Motor neuron (in vitro differentiated cells): ENCODE measurements at regions of chr2 and their contacts with region 1.

Region 1: GRCh38 chr2:175690113-175690837 is 311.8 kb downstream of the LNPK start:
- ATAC-seq: peak in 6 of 8 experiments; percentile 45 to 96 (median 74)
- H3K4me3 ChIP-seq: no peak overlapping the region
- H3K27ac ChIP-seq: no peak overlapping the region
- H3K4me1 ChIP-seq: peaks cover 0 to 27% of the 10 kb centered on the region in 2 donors

Region 2: DNA sequence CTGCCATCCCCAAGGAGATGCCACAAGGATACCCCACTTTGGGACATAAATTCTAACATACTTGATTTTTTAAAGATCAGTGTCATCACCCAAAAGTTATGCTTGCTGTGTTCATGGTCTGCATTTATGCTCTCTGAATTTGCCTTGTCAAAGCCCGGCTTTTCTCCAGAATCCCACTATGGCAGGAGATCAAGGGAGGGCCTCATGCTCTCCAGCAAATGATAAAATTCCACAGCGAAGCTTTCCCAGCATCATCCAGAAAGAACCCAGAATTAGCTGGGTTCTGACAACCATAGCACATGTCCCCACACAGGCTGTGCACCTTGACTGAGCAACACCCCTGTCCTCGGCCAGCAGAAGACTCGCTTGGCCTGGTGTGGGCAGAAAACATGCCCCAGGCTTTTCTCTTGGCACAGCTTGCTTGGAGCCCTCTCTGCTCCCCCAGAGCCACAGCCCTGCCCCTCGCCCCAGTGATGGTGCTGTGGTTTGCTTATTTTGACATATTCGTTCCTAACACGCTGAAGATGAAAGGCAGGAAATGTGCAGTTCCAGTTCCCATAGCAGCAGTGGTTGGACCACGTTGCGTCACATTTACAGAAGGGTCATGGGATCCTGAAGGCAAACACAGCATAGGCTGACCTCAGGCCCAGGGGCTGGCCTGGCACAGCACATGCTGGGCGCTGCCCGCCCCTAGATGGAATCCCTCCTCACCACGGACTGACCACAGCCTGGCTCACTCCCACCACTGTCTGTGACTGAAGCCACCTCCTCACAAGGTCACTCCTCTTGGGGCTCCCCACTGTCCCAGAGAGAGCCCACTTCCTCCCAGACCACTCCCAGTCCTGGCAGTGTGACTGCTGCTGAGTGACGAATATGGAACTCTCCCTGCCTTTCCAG is 911.9 kb before region 1 on chr2:
- in situ Hi-C with region 1: no loop called
- ATAC-seq: peak in 7 of 8 experiments; percentile 15 to 96 (median 58)
- H3K4me3 ChIP-seq: no peak overlapping the region
- H3K27ac ChIP-seq: no peak overlapping the region
- H3K4me1 ChIP-seq: peaks cover 36 to 41% of the 10 kb centered on the region in 2 donors

Region 3: DNA sequence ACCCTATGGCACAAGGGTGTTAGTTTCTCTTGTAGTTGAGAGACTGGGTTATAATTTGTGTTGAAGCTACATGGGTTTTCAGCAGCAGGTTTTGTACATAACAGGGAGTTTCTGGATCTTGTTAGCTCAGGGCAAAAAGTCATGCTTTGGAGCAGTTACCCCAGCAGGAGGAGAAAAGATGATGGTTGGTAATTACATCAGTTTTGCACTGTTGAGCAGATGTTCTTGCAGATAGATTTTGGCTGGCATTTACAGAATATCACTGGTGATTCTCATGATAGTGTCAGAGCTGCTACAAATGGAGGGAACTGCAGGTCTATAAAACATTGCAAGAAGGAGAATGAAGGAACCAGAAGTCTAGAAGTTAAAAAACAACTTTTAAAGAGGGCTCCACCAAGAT is 293.6 kb before region 1 on chr2:
- in situ Hi-C with region 1: loop called in 1 of 9 experiments (anchors 25 kb)
- ATAC-seq: no peak
- H3K4me3 ChIP-seq: no peak overlapping the region
- H3K27ac ChIP-seq: no peak overlapping the region
- H3K4me1 ChIP-seq: no peaks in the 10 kb centered on the region

Region 4: DNA sequence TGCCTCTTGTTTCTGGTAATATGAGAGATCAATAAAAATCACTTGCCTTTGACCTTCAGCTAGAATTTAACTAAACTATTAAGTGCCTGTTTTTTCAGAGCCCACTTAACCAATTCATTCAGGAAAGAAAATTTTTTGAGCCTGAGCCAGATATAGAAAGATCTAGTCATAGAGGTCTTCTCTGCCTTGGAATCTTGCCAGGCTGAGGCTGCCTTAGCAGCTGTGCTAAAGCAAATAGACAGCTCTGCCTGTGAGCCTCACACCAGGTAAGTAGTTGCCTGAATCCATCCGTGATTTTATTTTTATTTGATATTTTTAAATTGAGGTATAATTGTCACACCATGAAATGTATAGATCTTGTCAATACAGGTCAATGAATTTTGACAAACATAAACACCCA is 366.1 kb after region 1 on chr2:
- in situ Hi-C with region 1: loop called in 2 of 9 experiments (anchors 25 kb)
- ATAC-seq: no peak
- H3K4me3 ChIP-seq: no peak overlapping the region
- H3K27ac ChIP-seq: no peak overlapping the region
- H3K4me1 ChIP-seq: no peaks in the 10 kb centered on the region